ENCODE measurements at regions of chr6 and their contacts with region 1.

Region 1: GRCh38 chr6:30857549-30857948 is 26.8 kb upstream of the DDR1 start:
- DNase-seq: no peak
- H3K4me3 ChIP-seq: no peak overlapping the region
- H3K27ac ChIP-seq: no peak overlapping the region
- H3K4me1 ChIP-seq: peaks cover 0 to 3% (median 2%) of the 10 kb centered on the region in 4 experiments; a peak in 2 of 7 replicates
- H3K27me3 ChIP-seq: no peaks in the 10 kb centered on the region
- CTCF ChIP-seq: no peak
- EP300 ChIP-seq: no peak
- POLR2A ChIP-seq: no peak
- RAD21 ChIP-seq: no peak

Region 2: DNA sequence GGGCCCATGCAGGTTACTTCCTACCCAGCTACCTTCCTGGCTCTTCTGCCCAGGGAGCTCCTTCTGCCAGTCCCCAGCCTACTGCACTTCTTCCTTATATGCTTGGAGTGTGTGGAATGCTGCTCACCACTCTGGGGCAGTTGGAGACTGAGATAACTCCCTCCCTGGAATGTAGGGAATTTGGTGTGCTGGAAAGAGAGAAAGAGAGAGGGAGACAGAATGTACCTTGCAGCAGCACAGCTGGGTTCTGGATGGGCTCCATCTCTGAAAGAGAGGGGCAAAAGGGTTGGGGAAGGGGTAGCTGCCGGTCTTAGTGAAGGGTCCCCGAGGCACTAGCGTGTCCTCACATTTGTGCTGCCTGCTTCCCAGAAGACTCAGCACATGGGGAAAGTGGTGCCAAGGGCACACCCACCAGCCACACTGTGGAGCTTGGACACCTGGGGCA is 13.4 kb before region 1 on chr6:
- CTCF ChIA-PET with region 1: interaction called, 8 read pairs
- POLR2A ChIA-PET with region 1: interaction called, 23 read pairs
- DNase-seq: no peak
- H3K4me3 ChIP-seq: no peak overlapping the region
- H3K27ac ChIP-seq: 0 out of 2 replicates have a peak overlapping the region, but pooled peaks have one; percentile 45
- H3K4me1 ChIP-seq: peaks cover 5 to 13% (median 8%) of the 10 kb centered on the region in 4 experiments
- H3K27me3 ChIP-seq: no peaks in the 10 kb centered on the region
- CTCF ChIP-seq: 0 out of 4 replicates have a peak, but pooled peaks of 1 of the 3 experiments have one; percentile 12
- EP300 ChIP-seq: peak in 1 of 2 experiments; percentile 55; a peak in 1 of 3 replicates
- POLR2A ChIP-seq: peak; percentile 60 to 76; a peak in 2 of 3 replicates
- RAD21 ChIP-seq: peak; percentile 29 to 39; a peak in 2 of 4 replicates

Region 3: DNA sequence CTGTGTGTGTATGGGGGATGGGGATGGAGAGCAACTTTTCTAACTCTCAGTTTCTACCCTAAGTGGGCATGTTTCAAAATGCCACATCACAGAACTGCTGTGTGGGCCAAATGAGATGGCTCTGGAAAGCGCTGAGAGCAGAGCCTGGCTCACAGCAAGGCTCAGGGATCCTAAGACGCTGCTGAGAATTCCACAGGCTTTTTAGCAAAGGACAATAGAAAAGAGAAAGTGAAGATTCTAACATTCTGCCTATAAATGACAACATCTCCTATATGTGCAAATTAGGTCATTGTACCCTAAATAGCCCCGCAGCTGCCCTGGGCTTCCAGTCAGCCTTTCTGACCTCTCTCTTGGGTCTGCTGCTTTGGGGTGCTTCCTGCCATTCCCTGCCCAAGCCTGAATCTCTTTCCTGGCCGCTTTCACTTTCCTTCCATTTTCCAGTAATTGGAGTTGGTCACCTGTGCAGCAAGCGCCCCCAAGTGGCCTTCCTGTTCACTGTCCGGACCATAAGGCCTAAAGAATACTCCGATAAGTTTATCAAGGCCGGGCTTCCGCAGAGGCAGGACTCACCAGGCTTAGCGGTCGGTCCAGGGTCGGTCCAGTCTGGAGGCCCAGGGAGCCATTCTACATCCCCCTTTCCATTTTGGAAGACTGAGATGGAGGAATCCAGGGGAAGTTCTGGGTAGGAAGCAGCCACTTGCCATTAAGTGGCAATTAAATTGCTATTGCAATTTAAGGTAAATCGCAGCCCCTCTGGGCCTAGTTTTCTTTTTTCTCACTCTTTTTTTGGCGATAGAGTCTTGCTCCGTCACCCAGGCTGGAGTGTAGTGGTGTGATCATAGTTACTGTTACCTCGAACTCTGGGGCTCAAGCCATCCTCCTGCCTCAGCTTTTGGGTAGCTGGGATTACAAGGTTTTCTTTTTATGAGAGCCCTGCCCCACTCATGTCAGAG is 20.1 kb after region 1 on chr6:
- CTCF ChIA-PET with region 1: interaction called, 14 read pairs
- POLR2A ChIA-PET with region 1: interaction called, 4 read pairs
- DNase-seq: peak; percentile 70 to 89
- H3K4me3 ChIP-seq: no peak overlapping the region
- H3K27ac ChIP-seq: no peak overlapping the region
- H3K4me1 ChIP-seq: peaks cover 7 to 32% (median 21%) of the 10 kb centered on the region in 4 experiments
- H3K27me3 ChIP-seq: no peaks in the 10 kb centered on the region
- CTCF ChIP-seq: peak in 2 of 3 experiments; percentile 94 to 95; a peak in 3 of 4 replicates
- EP300 ChIP-seq: peak in 1 of 2 experiments; percentile 46; a peak in 1 of 3 replicates
- POLR2A ChIP-seq: no peak
- RAD21 ChIP-seq: peak; percentile 98 to 99

Region 4: DNA sequence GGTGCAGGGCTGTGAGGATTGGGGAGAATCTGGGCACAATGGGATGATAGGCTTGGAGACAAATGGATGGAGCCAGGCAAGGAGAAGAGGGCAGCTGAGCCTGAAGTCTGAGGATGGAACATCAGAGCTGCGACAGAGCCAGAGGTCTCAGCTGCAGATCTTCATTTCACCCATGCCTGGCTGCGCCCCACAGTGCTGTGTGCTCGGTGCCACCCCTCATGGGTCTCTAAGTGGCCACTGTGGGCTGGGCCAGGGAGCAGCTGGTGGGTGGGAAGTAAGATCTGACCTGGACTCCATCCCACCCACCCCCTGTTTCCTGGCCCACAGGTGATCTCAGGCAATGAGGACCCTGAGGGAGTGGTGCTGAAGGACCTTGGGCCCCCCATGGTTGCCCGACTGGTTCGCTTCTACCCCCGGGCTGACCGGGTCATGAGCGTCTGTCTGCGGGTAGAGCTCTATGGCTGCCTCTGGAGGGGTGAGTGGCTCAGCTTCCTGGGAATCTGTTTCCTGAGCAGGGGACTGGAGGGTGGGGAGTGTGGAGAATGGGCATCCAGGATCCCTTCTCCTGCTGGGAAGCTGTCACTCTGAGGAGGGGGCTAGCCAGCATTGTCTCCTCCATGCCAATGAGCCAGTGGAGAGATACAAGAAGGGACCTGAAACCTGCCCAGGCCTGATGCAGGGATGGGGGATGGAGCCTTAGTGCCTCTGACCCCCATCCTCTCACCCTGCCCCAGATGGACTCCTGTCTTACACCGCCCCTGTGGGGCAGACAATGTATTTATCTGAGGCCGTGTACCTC is 33.3 kb after region 1 on chr6:
- CTCF ChIA-PET with region 1: no interaction called
- POLR2A ChIA-PET with region 1: no interaction called
- DNase-seq: no peak
- H3K4me3 ChIP-seq: no peak overlapping the region
- H3K27ac ChIP-seq: no peak overlapping the region
- H3K4me1 ChIP-seq: peaks cover 6 to 16% (median 10%) of the 10 kb centered on the region in 4 experiments
- H3K27me3 ChIP-seq: no peaks in the 10 kb centered on the region
- CTCF ChIP-seq: no peak
- EP300 ChIP-seq: no peak
- POLR2A ChIP-seq: no peak; a peak in 1 of 3 replicates
- RAD21 ChIP-seq: no peak

Measured in H1 (cell line).